ENCODE measurements at regions of chr16 and their contacts with region 1.

Region 1: GRCh38 chr16:89720813-89721545 is at the starts of genes VPS9D1 and ZNF276:
- DNase-seq: peak; percentile 73 to 93 (median 85)
- ATAC-seq: peak; percentile 43
- H3K4me3 ChIP-seq: peak within 1 kb of the TSS; percentile 87
- H3K4me3 Mint-ChIP-seq: peak within 1 kb of the TSS; percentile 99
- H3K27ac ChIP-seq: peak within 1 kb of the TSS; percentile 69 to 94
- H3K27ac Mint-ChIP-seq: peak within 1 kb of the TSS; percentile 98
- H3K4me1 ChIP-seq: peaks cover 57% of the 10 kb centered on the region
- H3K4me1 Mint-ChIP-seq: peaks cover 32% of the 10 kb centered on the region
- H3K27me3 ChIP-seq: no peaks in the 10 kb centered on the region
- H3K27me3 Mint-ChIP-seq: no peaks in the 10 kb centered on the region
- CTCF ChIP-seq: no peak
- total RNA-seq, gene VPS9D1: 18.5 to 21.8 TPM
- total RNA-seq, gene ZNF276: 127 to 137 TPM

Region 2: GRCh38 chr16:89737341-89738071 is 16.5 kb after region 1 on chr16:
- CTCF ChIA-PET with region 1: interaction called, 6 read pairs
- POLR2A ChIA-PET with region 1: interaction called, 89 read pairs
- intact Hi-C with region 1: loop called (anchors 1 kb)
- DNase-seq: peak in 13 of 14 experiments; percentile 28 to 86 (median 54)
- ATAC-seq: peak; percentile 79
- H3K4me3 ChIP-seq: no peak overlapping the region
- H3K4me3 Mint-ChIP-seq: peak overlapping the region; percentile 69
- H3K27ac ChIP-seq: no peak overlapping the region
- H3K27ac Mint-ChIP-seq: peak overlapping the region; percentile 80
- H3K4me1 ChIP-seq: peaks cover 69% of the 10 kb centered on the region
- H3K4me1 Mint-ChIP-seq: peaks cover 44% of the 10 kb centered on the region
- H3K27me3 ChIP-seq: no peaks in the 10 kb centered on the region
- H3K27me3 Mint-ChIP-seq: no peaks in the 10 kb centered on the region
- CTCF ChIP-seq: no peak

Region 3: GRCh38 chr16:89761304-89761922 is 40.4 kb after region 1 on chr16:
- CTCF ChIA-PET with region 1: no interaction called
- POLR2A ChIA-PET with region 1: interaction called, 26 read pairs
- intact Hi-C with region 1: no loop called
- DNase-seq: peak in 4 of 14 experiments; percentile 41 to 66 (median 49)
- ATAC-seq: peak; percentile 68
- H3K4me3 ChIP-seq: peak overlapping the region; percentile 48
- H3K4me3 Mint-ChIP-seq: peak overlapping the region; percentile 87
- H3K27ac ChIP-seq: peak overlapping the region in 1 of 2 donors; percentile 24
- H3K27ac Mint-ChIP-seq: peak overlapping the region; percentile 88
- H3K4me1 ChIP-seq: peaks cover 65% of the 10 kb centered on the region
- H3K4me1 Mint-ChIP-seq: peaks cover 29% of the 10 kb centered on the region
- H3K27me3 ChIP-seq: no peaks in the 10 kb centered on the region
- H3K27me3 Mint-ChIP-seq: no peaks in the 10 kb centered on the region
- CTCF ChIP-seq: no peak

Region 4: DNA sequence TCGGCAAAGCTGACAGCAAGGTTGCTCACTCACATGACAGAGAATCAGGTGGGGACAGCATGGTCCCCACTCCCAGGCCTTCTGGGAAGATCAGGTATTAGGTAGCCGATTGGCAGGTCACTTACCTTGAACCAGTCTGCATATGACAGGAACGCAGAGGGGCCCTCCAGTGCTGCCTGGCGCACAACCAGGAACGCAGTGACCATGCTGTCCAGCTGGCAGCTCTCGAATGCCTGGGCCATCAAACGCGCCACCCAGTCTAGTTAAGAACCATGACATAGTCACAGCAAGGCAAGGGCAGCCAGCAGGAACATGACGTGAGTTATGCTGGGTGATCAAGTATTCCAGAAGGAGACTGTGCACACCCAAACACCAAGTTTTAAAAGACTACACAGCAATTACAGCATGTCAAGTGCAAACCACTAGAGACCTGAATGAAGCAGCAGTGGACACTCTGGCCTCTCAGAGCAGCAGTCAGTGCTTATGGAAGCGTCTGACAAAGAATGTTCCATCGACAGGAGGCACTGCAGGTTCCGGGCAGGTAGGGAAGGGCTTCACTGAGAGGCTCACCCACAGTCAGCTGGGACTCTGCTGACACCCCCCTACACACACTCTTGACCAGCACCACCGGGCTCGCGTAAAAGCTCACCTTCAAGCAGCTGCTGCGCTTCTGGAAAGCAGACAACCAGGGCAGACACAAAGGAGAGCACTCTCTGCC is 70.5 kb after region 1 on chr16:
- CTCF ChIA-PET with region 1: interaction called, 5 read pairs
- POLR2A ChIA-PET with region 1: interaction called, 5 read pairs
- intact Hi-C with region 1: loop called in 1 of 2 experiments (anchors 5 kb)
- DNase-seq: no peak
- ATAC-seq: no peak
- H3K4me3 ChIP-seq: no peak overlapping the region
- H3K4me3 Mint-ChIP-seq: no peak overlapping the region
- H3K27ac ChIP-seq: no peak overlapping the region
- H3K27ac Mint-ChIP-seq: no peak overlapping the region
- H3K4me1 ChIP-seq: peaks cover 14% of the 10 kb centered on the region
- H3K4me1 Mint-ChIP-seq: peaks cover 15% of the 10 kb centered on the region
- H3K27me3 ChIP-seq: no peaks in the 10 kb centered on the region
- H3K27me3 Mint-ChIP-seq: no peaks in the 10 kb centered on the region
- CTCF ChIP-seq: no peak

Region 5: GRCh38 chr16:89815639-89816348 is 94.8 kb after region 1 on chr16:
- CTCF ChIA-PET with region 1: no interaction called
- POLR2A ChIA-PET with region 1: no interaction called
- intact Hi-C with region 1: loop called in 1 of 2 experiments (anchors 5 kb)
- DNase-seq: peak in 2 of 14 experiments; percentile 13 to 39
- ATAC-seq: peak; percentile 9
- H3K4me3 ChIP-seq: peak overlapping the region; percentile 64
- H3K4me3 Mint-ChIP-seq: peak overlapping the region; percentile 83
- H3K27ac ChIP-seq: no peak overlapping the region
- H3K27ac Mint-ChIP-seq: no peak overlapping the region
- H3K4me1 ChIP-seq: peaks cover 29% of the 10 kb centered on the region
- H3K4me1 Mint-ChIP-seq: peaks cover 29% of the 10 kb centered on the region
- H3K27me3 ChIP-seq: no peaks in the 10 kb centered on the region
- H3K27me3 Mint-ChIP-seq: no peaks in the 10 kb centered on the region
- CTCF ChIP-seq: no peak

Region 6: GRCh38 chr16:89853306-89853993 is 132.5 kb after region 1 on chr16:
- CTCF ChIA-PET with region 1: no interaction called
- POLR2A ChIA-PET with region 1: no interaction called
- intact Hi-C with region 1: no loop called
- DNase-seq: no peak
- ATAC-seq: no peak
- H3K4me3 ChIP-seq: no peak overlapping the region
- H3K4me3 Mint-ChIP-seq: no peak overlapping the region
- H3K27ac ChIP-seq: no peak overlapping the region
- H3K27ac Mint-ChIP-seq: no peak overlapping the region
- H3K4me1 ChIP-seq: no peaks in the 10 kb centered on the region
- H3K4me1 Mint-ChIP-seq: no peaks in the 10 kb centered on the region
- H3K27me3 ChIP-seq: no peaks in the 10 kb centered on the region
- H3K27me3 Mint-ChIP-seq: no peaks in the 10 kb centered on the region
- CTCF ChIP-seq: no peak